ENCODE measurements at regions of chr3 and their contacts with region 1.

Region 1: DNA sequence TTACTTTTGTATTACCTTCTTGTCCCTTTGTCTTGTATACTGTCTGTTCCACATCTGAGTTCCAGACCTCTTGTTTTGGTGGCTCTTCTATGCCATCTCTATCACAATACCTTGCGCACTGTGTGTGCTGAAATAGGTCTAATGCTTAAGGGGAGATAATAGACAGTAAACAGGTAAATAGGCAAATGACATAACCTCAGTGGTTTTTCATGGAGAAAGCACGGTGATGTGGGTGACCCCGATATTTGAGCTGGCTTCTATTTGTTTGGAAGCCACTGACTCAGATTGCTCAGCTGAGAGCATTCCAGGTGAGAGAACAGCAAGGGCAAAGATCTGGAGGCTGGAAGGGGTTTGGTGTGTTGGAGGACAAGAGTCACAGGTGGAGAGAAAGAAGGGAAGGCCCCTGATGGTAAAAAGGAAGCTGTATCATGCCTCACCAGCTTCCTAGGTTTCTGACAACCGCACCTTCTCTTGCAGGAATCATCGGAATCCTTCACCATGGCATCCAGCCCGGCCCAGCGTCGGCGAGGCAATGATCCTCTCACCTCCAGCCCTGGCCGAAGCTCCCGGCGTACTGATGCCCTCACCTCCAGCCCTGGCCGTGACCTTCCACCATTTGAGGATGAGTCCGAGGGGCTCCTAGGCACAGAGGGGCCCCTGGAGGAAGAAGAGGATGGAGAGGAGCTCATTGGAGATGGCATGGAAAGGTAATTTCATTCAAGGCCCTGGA is 795 bp downstream of the MCM2 start:
- DNase-seq: no peak
- H3K4me3 ChIP-seq: peak overlapping the region; percentile 70
- H3K27ac ChIP-seq: peak overlapping the region; percentile 28
- H3K4me1 ChIP-seq: peaks cover 20% of the 10 kb centered on the region; the same call in 1 of the 2 replicates
- H3K27me3 ChIP-seq: no peaks in the 10 kb centered on the region
- CTCF ChIP-seq: no peak

Region 2: GRCh38 chr3:127639173-127640030 is 40.4 kb after region 1 on chr3:
- CTCF ChIA-PET with region 1: no interaction called
- POLR2A ChIA-PET with region 1: interaction called, 11 read pairs
- intact Hi-C with region 1: no loop called
- DNase-seq: peak; percentile 53 to 75
- H3K4me3 ChIP-seq: no peak overlapping the region
- H3K27ac ChIP-seq: peak overlapping the region; percentile 24; the same call in 1 of the 2 replicates
- H3K4me1 ChIP-seq: peaks cover 23% of the 10 kb centered on the region
- H3K27me3 ChIP-seq: no peaks in the 10 kb centered on the region
- CTCF ChIP-seq: no peak

Measured in PC-9 (cell line).